ENCODE measurements at regions of chr2 and their contacts with region 1.

Region 1: GRCh38 chr2:163828501-163829170 is 92.8 kb upstream of the FIGN start:
- DNase-seq: no peak
- H3K4me3 ChIP-seq: no peak overlapping the region
- H3K27ac ChIP-seq: no peak overlapping the region
- H3K4me1 ChIP-seq: no peaks in the 10 kb centered on the region
- H3K27me3 ChIP-seq: no peaks in the 10 kb centered on the region
- CTCF ChIP-seq: no peak
- POLR2A ChIP-seq: no peak

Region 2: GRCh38 chr2:164523009-164523408 is 694.4 kb after region 1 on chr2:
- CTCF ChIA-PET with region 1: no interaction called
- POLR2A ChIA-PET with region 1: no interaction called
- dilution Hi-C with region 1: no loop called
- intact Hi-C with region 1: loop called (anchors 10 kb)
- DNase-seq: no peak
- H3K4me3 ChIP-seq: no peak overlapping the region
- H3K27ac ChIP-seq: no peak overlapping the region
- H3K4me1 ChIP-seq: peaks cover 7% of the 10 kb centered on the region
- H3K27me3 ChIP-seq: no peaks in the 10 kb centered on the region
- CTCF ChIP-seq: no peak
- POLR2A ChIP-seq: no peak